PC-9 (cell line): ENCODE measurements at regions of chr15 and their contacts with region 1.

Region 1: DNA sequence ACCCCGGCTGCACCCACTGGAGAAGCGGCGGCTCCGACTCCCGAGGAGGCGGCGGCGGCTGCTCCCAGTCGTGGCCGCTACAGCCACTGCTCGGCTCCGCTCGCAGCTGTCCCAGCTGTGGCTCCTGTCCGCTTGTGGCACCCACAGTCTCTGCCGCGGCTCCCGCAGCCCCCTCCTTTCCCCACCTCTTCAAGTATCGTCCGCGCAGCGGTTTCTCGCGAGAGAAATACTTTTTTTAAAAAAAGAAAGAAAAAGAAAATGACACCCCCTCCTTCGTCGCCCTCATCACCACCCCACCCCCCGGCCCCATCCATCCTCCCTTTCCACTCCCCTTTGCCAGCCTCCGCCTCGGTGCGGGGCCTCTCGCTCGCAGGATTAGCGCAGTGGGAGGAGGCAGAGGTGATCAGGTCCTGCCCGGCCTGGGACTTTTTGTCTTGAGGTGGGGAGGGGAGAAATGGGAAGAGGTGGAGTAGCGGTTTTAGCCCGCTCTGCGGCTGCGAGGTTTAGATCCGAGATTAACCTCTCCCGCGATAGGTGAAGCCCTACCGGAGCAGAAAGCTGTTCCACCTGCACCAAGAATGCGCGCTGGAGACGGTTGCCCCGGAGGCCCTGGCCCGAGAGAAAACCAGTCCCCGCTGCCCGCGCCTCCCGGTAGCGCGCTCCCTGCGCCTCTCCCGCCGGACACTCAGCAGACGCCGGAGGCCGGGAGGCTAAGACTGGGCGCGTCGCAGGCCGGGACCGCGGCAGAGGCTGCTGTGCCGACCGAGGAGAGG is at the start of gene FBN1:
- DNase-seq: no peak
- H3K4me3 ChIP-seq: peak within 1 kb of the TSS; percentile 55; the same call in 1 of the 2 replicates
- H3K27ac ChIP-seq: no peak within 1 kb of the TSS
- H3K4me1 ChIP-seq: no peaks in the 10 kb centered on the region
- H3K27me3 ChIP-seq: no peaks in the 10 kb centered on the region
- CTCF ChIP-seq: no peak
- total RNA-seq, gene FBN1: 1.3 TPM in 2 replicates

Region 2: GRCh38 chr15:48131324-48131723 is 514.4 kb before region 1 on chr15:
- CTCF ChIA-PET with region 1: no interaction called
- POLR2A ChIA-PET with region 1: no interaction called
- intact Hi-C with region 1: no loop called
- DNase-seq: no peak
- H3K4me3 ChIP-seq: no peak overlapping the region
- H3K27ac ChIP-seq: no peak overlapping the region
- H3K4me1 ChIP-seq: no peaks in the 10 kb centered on the region
- H3K27me3 ChIP-seq: peaks cover 11% of the 10 kb centered on the region
- CTCF ChIP-seq: no peak

Region 3: GRCh38 chr15:48358229-48358641 is 287.5 kb before region 1 on chr15:
- CTCF ChIA-PET with region 1: no interaction called
- POLR2A ChIA-PET with region 1: no interaction called
- intact Hi-C with region 1: loop called (anchors 1 kb)
- DNase-seq: no peak
- H3K4me3 ChIP-seq: no peak overlapping the region
- H3K27ac ChIP-seq: no peak overlapping the region
- H3K4me1 ChIP-seq: no peaks in the 10 kb centered on the region
- H3K27me3 ChIP-seq: no peaks in the 10 kb centered on the region
- CTCF ChIP-seq: peak; percentile 70

Region 4: DNA sequence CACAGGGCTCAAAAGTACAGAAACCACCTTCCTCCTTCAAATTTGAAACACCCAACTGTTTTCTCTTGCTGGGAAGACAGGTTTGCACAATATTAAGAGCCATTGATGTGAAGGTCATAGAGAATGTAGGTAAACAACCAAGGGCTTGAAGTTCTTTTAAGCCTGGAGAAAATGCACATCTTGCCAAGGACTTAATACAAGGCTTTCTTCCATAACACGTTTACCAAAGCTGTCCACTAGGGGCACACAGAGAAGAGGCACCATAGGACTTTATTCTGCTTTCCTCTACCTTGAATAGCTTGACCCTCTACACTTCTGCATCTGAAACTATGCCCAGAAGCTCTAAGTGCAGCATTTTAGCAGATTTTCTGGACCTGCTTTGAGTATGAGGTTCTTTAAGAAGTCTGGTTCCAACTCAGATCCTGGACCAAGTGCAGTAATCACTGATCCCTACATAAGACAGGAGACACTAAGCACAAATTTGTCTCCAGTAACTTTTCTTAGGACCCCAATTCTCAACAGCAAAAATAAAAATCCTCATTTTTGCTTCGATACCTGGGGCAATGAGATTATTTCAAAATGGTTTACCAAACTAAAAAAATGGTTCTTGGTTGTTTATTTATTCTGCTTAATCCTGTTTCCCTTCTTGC is 138.2 kb before region 1 on chr15:
- CTCF ChIA-PET with region 1: no interaction called
- POLR2A ChIA-PET with region 1: no interaction called
- intact Hi-C with region 1: loop called (anchors 10 kb)
- DNase-seq: peak in 1 of 2 experiments; percentile 4
- H3K4me3 ChIP-seq: no peak overlapping the region
- H3K27ac ChIP-seq: no peak overlapping the region
- H3K4me1 ChIP-seq: no peaks in the 10 kb centered on the region
- H3K27me3 ChIP-seq: no peaks in the 10 kb centered on the region
- CTCF ChIP-seq: peak; percentile 72

Region 5: GRCh38 chr15:48683976-48684765 is 38.4 kb after region 1 on chr15:
- CTCF ChIA-PET with region 1: no interaction called
- POLR2A ChIA-PET with region 1: no interaction called
- intact Hi-C with region 1: no loop called
- DNase-seq: peak in 1 of 2 experiments; percentile 43
- H3K4me3 ChIP-seq: no peak overlapping the region
- H3K27ac ChIP-seq: peak overlapping the region; percentile 60; the same call in 1 of the 2 replicates
- H3K4me1 ChIP-seq: peaks cover 37% of the 10 kb centered on the region
- H3K27me3 ChIP-seq: no peaks in the 10 kb centered on the region
- CTCF ChIP-seq: no peak

Region 6: GRCh38 chr15:48748535-48748934 is 102.8 kb after region 1 on chr15:
- CTCF ChIA-PET with region 1: no interaction called
- POLR2A ChIA-PET with region 1: no interaction called
- intact Hi-C with region 1: loop called (anchors 5 kb)
- DNase-seq: no peak
- H3K4me3 ChIP-seq: no peak overlapping the region
- H3K27ac ChIP-seq: no peak overlapping the region
- H3K4me1 ChIP-seq: no peaks in the 10 kb centered on the region
- H3K27me3 ChIP-seq: no peaks in the 10 kb centered on the region
- CTCF ChIP-seq: no peak

Region 7: GRCh38 chr15:48800811-48801455 is 155.2 kb after region 1 on chr15:
- CTCF ChIA-PET with region 1: no interaction called
- POLR2A ChIA-PET with region 1: no interaction called
- intact Hi-C with region 1: loop called (anchors 10 kb)
- DNase-seq: no peak
- H3K4me3 ChIP-seq: no peak overlapping the region
- H3K27ac ChIP-seq: no peak overlapping the region
- H3K4me1 ChIP-seq: no peaks in the 10 kb centered on the region
- H3K27me3 ChIP-seq: no peaks in the 10 kb centered on the region
- CTCF ChIP-seq: peak; percentile 60